ENCODE measurements at regions of chr1 and their contacts with region 1.

Region 1: GRCh38 chr1:17486242-17486641 is 46.8 kb upstream of the RCC2 start:
- H3K4me3 ChIP-seq: no peak overlapping the region
- H3K27ac ChIP-seq: no peak overlapping the region
- H3K4me1 ChIP-seq: no peaks in the 10 kb centered on the region
- CTCF ChIP-seq: no peak

Region 2: DNA sequence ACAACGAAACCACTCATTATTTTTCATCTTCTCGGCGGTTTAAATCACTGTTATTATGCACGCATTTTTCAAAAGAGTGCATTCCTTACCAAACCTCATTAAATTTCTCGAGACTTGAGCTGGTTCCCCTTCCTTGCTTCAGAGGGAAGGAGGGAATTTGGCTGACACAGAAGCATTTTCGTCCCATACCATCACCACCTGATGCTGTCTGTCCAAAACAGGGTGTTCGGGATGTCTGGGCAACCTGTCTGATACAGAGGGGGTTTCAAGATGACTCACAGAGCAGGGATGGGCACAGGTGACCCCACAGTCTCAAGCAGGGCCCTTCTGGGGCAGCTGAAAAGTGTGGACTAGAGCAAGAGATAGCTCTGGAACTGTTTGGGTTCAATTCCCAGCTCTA is 34.5 kb before region 1 on chr1:
- CTCF ChIA-PET with region 1: no interaction called
- POLR2A ChIA-PET with region 1: no interaction called
- H3K4me3 ChIP-seq: no peak overlapping the region
- H3K27ac ChIP-seq: no peak overlapping the region
- H3K4me1 ChIP-seq: no peaks in the 10 kb centered on the region
- CTCF ChIP-seq: no peak

Region 3: DNA sequence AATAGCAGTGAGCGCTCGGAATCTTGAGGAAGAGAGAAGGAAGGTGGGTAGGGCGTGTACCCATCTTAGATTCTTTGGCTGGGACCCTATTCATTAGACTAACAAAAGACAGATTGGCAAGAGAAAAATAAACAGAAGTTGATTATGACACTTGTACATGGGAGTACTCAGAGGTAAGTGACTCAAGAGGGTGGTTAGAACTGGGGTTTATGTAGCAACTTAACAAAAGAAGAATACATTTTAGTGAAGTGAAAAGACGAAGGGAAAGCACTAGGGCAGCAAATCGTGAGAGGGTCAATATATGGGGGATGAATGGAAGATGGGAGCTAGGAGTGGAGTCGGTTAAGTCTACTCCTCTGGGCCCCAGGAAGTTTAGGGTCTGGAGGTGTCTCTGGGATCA is 21.0 kb before region 1 on chr1:
- CTCF ChIA-PET with region 1: no interaction called
- POLR2A ChIA-PET with region 1: no interaction called
- H3K4me3 ChIP-seq: no peak overlapping the region
- H3K27ac ChIP-seq: no peak overlapping the region
- H3K4me1 ChIP-seq: no peaks in the 10 kb centered on the region
- CTCF ChIP-seq: no peak

Region 4: DNA sequence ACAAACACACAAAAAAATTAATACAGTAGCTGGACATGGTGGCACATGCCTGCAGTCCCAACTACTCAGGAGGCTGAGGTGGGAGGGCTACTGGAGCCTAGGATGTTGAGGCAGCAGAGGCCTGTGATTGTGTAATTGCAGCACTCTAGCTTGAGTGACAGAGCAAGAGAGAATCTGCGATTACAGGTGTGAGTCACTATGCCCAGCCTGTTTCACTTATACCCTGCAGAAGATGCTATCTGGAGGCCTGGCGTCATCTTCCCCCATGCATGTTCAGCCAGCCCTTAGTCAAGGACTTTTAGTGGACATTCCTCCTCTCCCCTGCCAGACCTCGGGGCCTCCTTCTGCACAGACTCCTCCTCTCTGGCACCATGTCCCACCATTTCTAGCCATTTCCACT is 10.5 kb before region 1 on chr1:
- CTCF ChIA-PET with region 1: interaction called, 11 read pairs
- POLR2A ChIA-PET with region 1: no interaction called
- H3K4me3 ChIP-seq: no peak overlapping the region
- H3K27ac ChIP-seq: no peak overlapping the region
- H3K4me1 ChIP-seq: no peaks in the 10 kb centered on the region
- CTCF ChIP-seq: no peak

Measured in HEK293 (cell line).